CD14-positive monocyte (primary cell): ENCODE measurements at regions of chr9 and their contacts with region 1.

Region 1: DNA sequence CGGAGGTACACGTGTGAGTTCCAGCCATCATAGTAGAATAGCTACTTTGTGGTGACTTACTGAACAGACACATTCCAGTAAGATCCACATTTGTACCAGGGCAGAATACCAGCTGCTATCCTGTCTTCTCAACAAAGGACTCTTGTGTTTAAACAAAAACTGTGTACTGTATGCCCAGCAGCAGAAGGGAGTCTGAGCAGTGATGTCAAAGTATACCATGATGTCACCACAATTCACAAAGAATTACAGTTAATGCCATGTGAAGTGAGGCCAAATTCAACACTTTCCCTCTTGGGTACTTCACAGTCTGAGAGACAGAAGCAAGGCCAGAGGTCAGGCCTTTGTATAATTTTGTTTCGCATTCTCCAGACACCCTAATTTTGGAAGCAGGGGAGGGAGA is 137.0 kb downstream of the ADAMTSL1 start:
- DNase-seq: no peak
- H3K4me3 ChIP-seq: no peak overlapping the region
- H3K4me3 Mint-ChIP-seq: no peak overlapping the region
- H3K27ac ChIP-seq: no peak overlapping the region
- H3K27ac Mint-ChIP-seq: no peak overlapping the region
- H3K4me1 ChIP-seq: no peaks in the 10 kb centered on the region
- H3K4me1 Mint-ChIP-seq: no peaks in the 10 kb centered on the region
- H3K27me3 ChIP-seq: no peaks in the 10 kb centered on the region
- H3K27me3 Mint-ChIP-seq: no peaks in the 10 kb centered on the region
- CTCF ChIP-seq: no peak

Region 2: DNA sequence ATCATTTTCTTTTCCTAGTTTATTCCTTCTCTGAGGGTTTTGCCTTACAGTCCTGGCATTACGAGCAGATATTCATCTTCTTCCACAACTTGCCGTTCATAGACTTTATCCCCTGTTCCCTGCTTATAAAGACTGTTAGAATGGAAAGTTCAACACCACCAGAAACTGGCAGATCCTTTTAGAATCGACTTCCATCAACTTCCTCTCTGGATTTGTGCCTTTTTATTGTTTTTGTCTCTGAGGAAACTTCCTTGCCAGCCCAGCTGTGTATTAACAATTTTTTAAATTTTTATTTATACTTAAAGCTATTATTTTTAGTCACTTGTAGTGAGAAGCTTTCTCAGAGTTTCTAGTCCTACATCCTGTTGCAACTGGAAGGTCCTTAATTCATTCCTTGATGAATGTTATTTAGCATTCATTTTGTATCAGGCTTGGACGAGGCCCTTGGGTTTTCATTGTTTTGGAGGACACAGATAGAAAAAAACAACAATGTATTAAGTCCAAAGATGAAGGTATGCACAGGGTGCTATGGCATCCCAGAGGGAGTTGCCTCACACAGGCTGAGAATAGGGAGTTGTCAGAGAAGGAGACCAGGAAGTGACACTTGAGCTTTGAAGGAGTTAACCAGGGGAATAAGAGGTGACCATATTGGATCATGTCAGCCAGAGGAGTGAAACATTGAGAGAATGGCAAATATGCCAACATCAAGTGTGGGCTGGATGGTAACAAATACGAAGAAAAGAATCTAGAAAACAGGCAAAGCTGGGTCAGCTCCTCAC is 55.7 kb before region 1 on chr9:
- intact Hi-C with region 1: loop called in 1 of 2 experiments (anchors 10 kb)
- DNase-seq: no peak
- H3K4me3 ChIP-seq: no peak overlapping the region
- H3K4me3 Mint-ChIP-seq: no peak overlapping the region
- H3K27ac ChIP-seq: no peak overlapping the region
- H3K27ac Mint-ChIP-seq: no peak overlapping the region
- H3K4me1 ChIP-seq: no peaks in the 10 kb centered on the region
- H3K4me1 Mint-ChIP-seq: no peaks in the 10 kb centered on the region
- H3K27me3 ChIP-seq: no peaks in the 10 kb centered on the region
- H3K27me3 Mint-ChIP-seq: peaks cover 0 to 1% (median 0%) of the 10 kb centered on the region in 3 donors
- CTCF ChIP-seq: no peak

Region 3: GRCh38 chr9:18678821-18679590 is 68.0 kb after region 1 on chr9:
- intact Hi-C with region 1: no loop called
- DNase-seq: no peak
- H3K4me3 ChIP-seq: no peak overlapping the region
- H3K4me3 Mint-ChIP-seq: no peak overlapping the region
- H3K27ac ChIP-seq: no peak overlapping the region
- H3K27ac Mint-ChIP-seq: no peak overlapping the region
- H3K4me1 ChIP-seq: no peaks in the 10 kb centered on the region
- H3K4me1 Mint-ChIP-seq: no peaks in the 10 kb centered on the region
- H3K27me3 ChIP-seq: no peaks in the 10 kb centered on the region
- H3K27me3 Mint-ChIP-seq: peaks cover 0 to 3% (median 3%) of the 10 kb centered on the region in 3 donors
- CTCF ChIP-seq: no peak